ENCODE measurements at regions of chr20 and their contacts with region 1.

Region 1: DNA sequence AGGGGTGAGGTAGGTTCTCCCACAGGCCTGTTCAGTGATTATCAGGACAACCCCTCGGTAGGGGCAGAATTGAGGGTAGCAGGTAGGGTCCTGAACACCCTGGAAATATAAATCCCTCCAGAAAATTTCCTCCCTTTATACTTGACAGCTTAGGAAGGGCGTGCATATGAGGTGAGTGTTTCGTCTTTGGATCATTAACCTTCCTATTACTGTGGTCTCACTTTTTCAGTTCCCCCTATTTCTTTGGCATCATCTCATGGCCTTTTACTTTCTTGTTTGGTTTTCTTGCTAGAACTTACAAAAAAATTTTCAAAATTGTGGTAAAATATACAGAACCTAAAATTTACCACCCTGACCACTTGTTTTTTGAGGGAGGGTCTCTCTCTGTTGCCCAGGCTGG is 18.7 kb upstream of the EPB41L1 start:
- DNase-seq: no peak
- H3K4me3 ChIP-seq: no peak overlapping the region
- H3K27ac ChIP-seq: no peak overlapping the region
- H3K4me1 ChIP-seq: no peaks in the 10 kb centered on the region
- H3K27me3 ChIP-seq: no peaks in the 10 kb centered on the region
- CTCF ChIP-seq: no peak

Region 2: DNA sequence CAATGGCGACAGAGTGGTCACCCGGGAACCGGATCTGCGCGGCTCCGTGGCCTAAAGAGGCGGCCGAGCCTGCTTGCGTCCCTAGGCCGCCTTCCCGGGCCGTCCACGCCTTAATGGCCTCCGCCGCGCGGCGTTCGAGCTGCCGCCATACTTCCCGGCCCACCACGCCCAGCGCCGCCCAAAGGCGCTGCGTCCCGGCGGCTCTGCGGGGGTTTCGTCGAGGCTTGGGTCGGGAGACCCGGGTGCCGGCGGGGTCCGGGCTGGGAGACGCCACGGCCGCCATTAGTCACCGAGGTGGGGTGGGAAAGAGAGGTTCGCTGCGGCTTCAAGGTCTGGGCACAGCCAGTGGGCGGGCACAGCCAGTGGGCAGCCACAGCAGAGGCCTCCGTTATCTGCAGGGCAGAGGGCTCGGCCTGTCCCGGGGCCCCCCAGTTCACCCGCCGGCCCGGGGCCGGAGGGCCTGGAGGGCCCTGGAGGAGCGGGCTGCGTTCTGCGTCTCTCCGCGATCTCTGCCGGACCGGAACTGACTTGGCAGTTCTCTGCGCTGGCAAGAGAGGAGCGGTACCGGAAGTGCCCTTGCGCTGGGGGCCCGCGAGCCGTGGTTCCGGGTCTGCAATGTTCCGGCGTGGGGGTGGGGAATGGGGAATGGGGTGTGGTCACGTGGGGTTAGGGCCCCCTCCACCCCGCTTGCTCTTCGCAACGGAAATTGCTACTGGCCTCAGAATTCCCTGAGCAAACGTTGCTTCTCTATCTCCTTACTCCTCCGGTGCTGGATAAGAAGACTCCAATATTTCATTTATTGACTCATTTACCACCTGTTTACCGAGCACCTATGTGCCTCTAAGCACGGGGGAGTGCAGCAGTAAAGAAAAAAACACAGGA is 85.1 kb before region 1 on chr20:
- CTCF ChIA-PET with region 1: interaction called, 4 read pairs
- POLR2A ChIA-PET with region 1: no interaction called
- intact Hi-C with region 1: loop called (anchors 2 kb)
- DNase-seq: peak; percentile 67 to 92
- H3K4me3 ChIP-seq: peak overlapping the region; percentile 95
- H3K27ac ChIP-seq: peak overlapping the region; percentile 79
- H3K4me1 ChIP-seq: peaks cover 26% of the 10 kb centered on the region
- H3K27me3 ChIP-seq: no peaks in the 10 kb centered on the region
- CTCF ChIP-seq: no peak